CD8-positive, alpha-beta memory T cell (primary cell): ENCODE measurements at regions of chr1 and their contacts with region 1.

Region 1: DNA sequence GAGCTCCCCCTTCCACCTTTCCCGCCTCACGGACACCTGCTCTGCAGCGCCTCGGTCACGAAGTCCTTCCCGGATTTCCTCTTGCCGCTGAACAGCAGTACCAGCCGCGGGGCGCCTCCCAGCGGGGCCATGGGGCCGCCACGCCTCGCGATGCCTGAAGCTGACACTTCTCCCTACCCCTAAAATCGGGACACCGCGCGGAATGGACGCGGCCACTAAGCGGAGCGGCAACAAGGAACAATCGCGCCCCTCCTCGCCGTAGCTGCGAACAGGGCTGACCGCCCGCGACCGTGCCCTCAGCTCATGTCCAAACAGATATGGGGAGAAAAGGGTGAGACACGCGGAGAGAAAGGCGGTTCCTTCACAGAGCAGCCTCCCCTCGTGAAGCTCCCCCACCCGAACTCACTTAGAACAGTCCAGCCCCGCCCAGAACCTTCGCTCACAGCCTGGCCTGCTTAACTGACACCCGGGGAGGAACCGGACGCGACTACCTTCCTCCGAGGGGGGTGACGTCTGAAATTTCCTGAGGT is at the start of gene PMVK:
- DNase-seq: peak; percentile 92 to 98 (median 97)
- H3K4me3 ChIP-seq: peak within 1 kb of the TSS; percentile 77
- H3K4me3 Mint-ChIP-seq: peak within 1 kb of the TSS; percentile 94 to 100 (median 98)
- H3K27ac ChIP-seq: peak within 1 kb of the TSS; percentile 97
- H3K27ac Mint-ChIP-seq: peak within 1 kb of the TSS; percentile 99 to 100 (median 99)
- H3K4me1 ChIP-seq: peaks cover 44% of the 10 kb centered on the region
- H3K4me1 Mint-ChIP-seq: peaks cover 47 to 66% (median 57%) of the 10 kb centered on the region in 3 donors
- H3K27me3 ChIP-seq: no peaks in the 10 kb centered on the region
- H3K27me3 Mint-ChIP-seq: no peaks in the 10 kb centered on the region
- total RNA-seq, gene PMVK: 44.7 to 45.2 TPM

Region 2: DNA sequence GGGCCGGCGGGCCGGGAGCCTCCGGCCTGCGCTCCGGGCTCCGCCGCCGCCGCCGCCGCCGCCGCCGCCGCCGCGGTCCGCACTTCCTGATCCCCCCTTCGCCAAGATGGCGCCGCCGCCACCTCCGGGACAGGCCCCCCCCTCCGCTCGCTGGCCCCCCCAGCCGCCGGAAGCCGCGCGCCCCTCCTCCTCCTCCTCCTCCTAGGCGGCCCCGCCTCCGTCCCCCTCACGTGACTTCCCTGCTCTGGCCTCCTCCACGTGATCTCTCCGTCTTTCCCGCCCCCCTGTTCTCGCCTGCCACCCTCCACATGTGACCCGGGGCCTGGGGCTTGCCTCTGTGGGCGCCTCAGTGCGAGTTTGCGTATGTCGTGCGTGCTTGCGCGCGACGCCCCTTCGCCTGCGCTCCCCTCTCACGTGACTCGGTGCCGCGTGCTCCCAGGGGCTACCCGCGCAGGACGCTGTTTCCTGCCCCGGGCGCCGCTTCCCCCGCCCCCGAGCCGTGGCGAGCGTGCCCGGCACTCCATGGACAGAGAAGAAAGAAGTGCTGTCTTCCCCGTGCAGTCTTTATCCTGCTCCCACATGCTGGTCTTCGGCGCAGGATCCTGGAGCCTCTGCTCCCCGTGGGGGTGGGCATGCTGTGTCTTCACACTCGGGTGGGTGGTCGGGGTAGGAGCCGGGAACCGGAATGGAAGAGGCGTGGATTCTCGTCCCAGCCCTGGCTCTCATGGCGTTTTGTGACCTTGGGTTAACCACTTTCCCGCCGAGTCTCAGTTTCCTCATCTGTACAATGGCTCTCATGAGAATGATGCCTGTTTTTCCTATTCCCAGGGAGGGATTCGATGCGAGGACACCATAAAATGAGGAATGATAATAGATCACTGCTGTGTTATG is 377.8 kb before region 1 on chr1 and contains the start of gene UBE2Q1:
- CTCF ChIA-PET with region 1: interaction called, 10 read pairs
- POLR2A ChIA-PET with region 1: interaction called, 4 read pairs
- DNase-seq: peak; percentile 99 to 100 (median 100)
- H3K4me3 ChIP-seq: peak within 1 kb of the TSS; percentile 87
- H3K4me3 Mint-ChIP-seq: peak within 1 kb of the TSS; percentile 90 to 96 (median 92)
- H3K27ac ChIP-seq: peak within 1 kb of the TSS; percentile 65
- H3K27ac Mint-ChIP-seq: peak within 1 kb of the TSS; percentile 86 to 96 (median 94)
- H3K4me1 ChIP-seq: peaks cover 24% of the 10 kb centered on the region
- H3K4me1 Mint-ChIP-seq: peaks cover 36 to 49% (median 46%) of the 10 kb centered on the region in 3 donors
- H3K27me3 ChIP-seq: no peaks in the 10 kb centered on the region
- H3K27me3 Mint-ChIP-seq: peaks cover 0 to 2% of the 10 kb centered on the region in 2 donors
- total RNA-seq, gene UBE2Q1: 83.8 to 97.8 TPM

Region 3: DNA sequence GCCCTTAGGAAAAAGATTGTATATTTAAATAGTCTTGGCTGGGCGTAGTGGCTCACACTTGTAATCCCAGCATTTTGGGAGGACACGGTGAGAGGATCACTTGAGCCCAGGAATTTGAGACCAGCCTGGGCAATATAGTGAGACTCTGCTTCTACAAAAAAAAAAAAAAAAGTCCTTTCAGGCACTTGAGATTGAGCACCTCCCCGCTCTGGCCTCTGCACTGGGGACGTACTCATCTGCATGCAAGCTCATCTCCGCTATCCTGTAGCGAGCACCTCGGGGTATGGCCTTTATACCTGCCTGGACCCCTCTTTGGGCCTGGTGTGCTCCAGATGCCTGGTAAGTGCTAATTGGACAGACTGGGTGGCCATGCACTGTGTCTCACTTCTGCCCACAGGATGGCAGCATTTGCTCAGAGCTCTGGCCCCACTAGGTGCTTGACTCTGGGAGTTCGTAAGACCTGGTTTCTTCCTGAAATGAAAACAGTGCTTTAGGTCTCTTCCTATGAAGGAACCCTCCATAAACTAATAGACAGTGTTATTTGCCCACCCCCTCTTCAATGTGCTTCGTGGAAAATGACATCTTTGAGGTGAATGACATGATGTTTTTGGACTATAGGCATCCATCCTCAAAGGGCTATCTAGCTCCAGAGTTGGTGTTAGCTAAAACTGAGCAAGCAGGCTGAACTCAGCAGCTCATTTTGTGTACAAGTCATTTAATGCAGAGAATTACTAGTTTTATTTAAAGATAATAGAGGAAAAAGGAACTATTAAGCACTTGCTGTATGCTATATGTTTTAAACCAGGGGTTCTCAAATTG is 266.9 kb before region 1 on chr1:
- CTCF ChIA-PET with region 1: no interaction called
- POLR2A ChIA-PET with region 1: no interaction called
- DNase-seq: peak; percentile 37 to 82 (median 55)
- H3K4me3 ChIP-seq: no peak overlapping the region
- H3K4me3 Mint-ChIP-seq: no peak overlapping the region
- H3K27ac ChIP-seq: no peak overlapping the region
- H3K27ac Mint-ChIP-seq: no peak overlapping the region
- H3K4me1 ChIP-seq: no peaks in the 10 kb centered on the region
- H3K4me1 Mint-ChIP-seq: no peaks in the 10 kb centered on the region
- H3K27me3 ChIP-seq: no peaks in the 10 kb centered on the region
- H3K27me3 Mint-ChIP-seq: peaks cover 3 to 11% of the 10 kb centered on the region in 2 donors

Region 4: DNA sequence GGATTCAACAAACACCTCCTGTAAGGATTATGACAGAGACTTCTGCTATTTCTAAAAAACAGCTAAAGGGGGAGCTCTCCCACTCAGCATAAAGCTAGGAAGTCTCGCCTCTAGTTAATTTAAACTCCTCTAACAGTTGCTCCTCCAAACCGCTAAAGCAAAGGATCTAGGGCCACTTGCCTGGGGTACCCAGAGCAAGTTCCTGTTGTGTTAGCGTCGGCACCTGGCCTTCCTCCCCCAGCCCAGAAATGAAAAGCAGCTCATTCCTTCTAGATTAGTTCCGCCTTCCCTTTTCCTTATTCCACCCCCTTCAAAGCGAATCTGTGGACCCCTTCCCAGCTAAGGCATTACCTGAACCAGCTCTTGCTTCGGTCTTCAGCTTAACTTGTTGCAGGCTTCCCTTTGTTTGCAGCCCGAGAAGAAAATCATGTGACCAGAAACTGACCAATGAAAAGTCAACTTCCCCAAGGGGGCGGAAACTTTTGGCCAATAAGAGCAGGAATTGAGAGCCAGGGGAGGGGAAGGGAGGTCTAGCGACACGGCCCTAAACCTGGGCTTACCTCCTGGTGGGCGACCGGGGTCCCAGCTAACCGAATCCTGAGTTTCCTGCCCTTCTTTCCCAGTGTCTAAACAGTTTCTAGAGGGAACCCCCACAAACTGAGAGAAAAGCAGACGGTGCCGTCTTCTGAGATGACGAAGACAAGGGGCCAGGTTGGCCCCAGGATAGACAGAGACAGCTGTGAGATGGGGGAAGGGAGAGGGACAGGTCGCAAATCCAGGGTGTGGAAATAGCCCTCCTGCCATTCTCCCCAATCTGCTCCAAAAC is 19.3 kb after region 1 on chr1 and contains the start of gene PBXIP1:
- CTCF ChIA-PET with region 1: interaction called, 12 read pairs
- POLR2A ChIA-PET with region 1: interaction called, 45 read pairs
- DNase-seq: peak; percentile 67 to 94 (median 89)
- H3K4me3 ChIP-seq: peak within 1 kb of the TSS; percentile 85
- H3K4me3 Mint-ChIP-seq: peak within 1 kb of the TSS; percentile 95 to 99 (median 97)
- H3K27ac ChIP-seq: peak within 1 kb of the TSS; percentile 100
- H3K27ac Mint-ChIP-seq: peak within 1 kb of the TSS; percentile 99 to 100 (median 100)
- H3K4me1 ChIP-seq: peaks cover 66% of the 10 kb centered on the region
- H3K4me1 Mint-ChIP-seq: peaks cover 63 to 90% (median 77%) of the 10 kb centered on the region in 3 donors
- H3K27me3 ChIP-seq: no peaks in the 10 kb centered on the region
- H3K27me3 Mint-ChIP-seq: peaks cover 0 to 9% of the 10 kb centered on the region in 2 donors
- total RNA-seq, gene PBXIP1: 35.9 to 36.1 TPM

Region 5: GRCh38 chr1:154961497-154962262 is 25.1 kb after region 1 on chr1 and contains the start of gene PYGO2:
- CTCF ChIA-PET with region 1: interaction called, 7 read pairs
- POLR2A ChIA-PET with region 1: interaction called, 11 read pairs
- DNase-seq: peak; percentile 74 to 86 (median 82)
- H3K4me3 ChIP-seq: peak within 1 kb of the TSS; percentile 64
- H3K4me3 Mint-ChIP-seq: peak within 1 kb of the TSS; percentile 92 to 98 (median 96)
- H3K27ac ChIP-seq: peak within 1 kb of the TSS; percentile 92
- H3K27ac Mint-ChIP-seq: peak within 1 kb of the TSS; percentile 94 to 99 (median 98)
- H3K4me1 ChIP-seq: peaks cover 28% of the 10 kb centered on the region
- H3K4me1 Mint-ChIP-seq: peaks cover 29 to 57% (median 47%) of the 10 kb centered on the region in 3 donors
- H3K27me3 ChIP-seq: no peaks in the 10 kb centered on the region
- H3K27me3 Mint-ChIP-seq: peaks cover 0 to 1% of the 10 kb centered on the region in 2 donors
- total RNA-seq, gene PYGO2: 34.2 to 35.3 TPM